Posterior vena cava (tissue), 2 donors: ENCODE measurements at regions of chr1 and their contacts with region 1.

Region 1: GRCh38 chr1:235067263-235068172 is 61.1 kb downstream of the TOMM20 start:
- DNase-seq: peak; percentile 97

Region 2: GRCh38 chr1:234997201-234997895 is 70.2 kb before region 1 on chr1:
- intact Hi-C with region 1: loop called (anchors 5 to 10 kb)
- DNase-seq: peak; percentile 99